ENCODE measurements at regions of chr4 and their contacts with region 1.

Region 1: DNA sequence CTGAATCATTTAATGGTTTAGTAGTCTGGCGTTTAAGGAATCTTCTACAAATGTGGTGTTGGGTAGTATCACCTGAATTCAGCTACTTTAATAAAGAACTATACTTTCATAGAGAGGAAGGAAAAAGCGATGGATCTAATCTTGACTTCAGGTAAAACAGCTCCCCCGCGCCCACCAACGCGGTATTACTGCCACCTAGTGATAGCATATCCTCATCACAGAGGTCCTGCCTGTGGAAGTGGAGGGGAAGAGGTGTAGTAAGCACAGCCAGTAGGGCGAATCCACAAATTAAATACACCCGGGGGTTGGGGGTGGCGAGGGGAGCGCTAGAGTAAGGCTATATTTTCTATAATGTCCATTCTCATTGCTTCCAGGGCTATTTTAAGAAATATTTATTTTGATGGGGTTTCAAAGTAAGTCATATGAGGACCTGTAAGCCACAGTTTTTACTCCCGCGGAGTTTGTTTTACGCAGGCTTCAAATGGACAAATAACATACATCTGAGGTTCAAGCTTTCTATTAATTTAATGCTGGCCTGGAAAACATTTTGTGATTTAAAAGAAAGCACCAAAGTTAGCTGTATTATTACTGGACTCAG is 8.3 kb upstream of the DAPP1 start:
- DNase-seq: peak; percentile 86
- ATAC-seq: peak; percentile 95
- H3K4me3 Mint-ChIP-seq: no peak overlapping the region
- H3K27ac Mint-ChIP-seq: no peak overlapping the region
- H3K4me1 Mint-ChIP-seq: peaks cover 17% of the 10 kb centered on the region
- H3K27me3 Mint-ChIP-seq: no peaks in the 10 kb centered on the region

Region 2: DNA sequence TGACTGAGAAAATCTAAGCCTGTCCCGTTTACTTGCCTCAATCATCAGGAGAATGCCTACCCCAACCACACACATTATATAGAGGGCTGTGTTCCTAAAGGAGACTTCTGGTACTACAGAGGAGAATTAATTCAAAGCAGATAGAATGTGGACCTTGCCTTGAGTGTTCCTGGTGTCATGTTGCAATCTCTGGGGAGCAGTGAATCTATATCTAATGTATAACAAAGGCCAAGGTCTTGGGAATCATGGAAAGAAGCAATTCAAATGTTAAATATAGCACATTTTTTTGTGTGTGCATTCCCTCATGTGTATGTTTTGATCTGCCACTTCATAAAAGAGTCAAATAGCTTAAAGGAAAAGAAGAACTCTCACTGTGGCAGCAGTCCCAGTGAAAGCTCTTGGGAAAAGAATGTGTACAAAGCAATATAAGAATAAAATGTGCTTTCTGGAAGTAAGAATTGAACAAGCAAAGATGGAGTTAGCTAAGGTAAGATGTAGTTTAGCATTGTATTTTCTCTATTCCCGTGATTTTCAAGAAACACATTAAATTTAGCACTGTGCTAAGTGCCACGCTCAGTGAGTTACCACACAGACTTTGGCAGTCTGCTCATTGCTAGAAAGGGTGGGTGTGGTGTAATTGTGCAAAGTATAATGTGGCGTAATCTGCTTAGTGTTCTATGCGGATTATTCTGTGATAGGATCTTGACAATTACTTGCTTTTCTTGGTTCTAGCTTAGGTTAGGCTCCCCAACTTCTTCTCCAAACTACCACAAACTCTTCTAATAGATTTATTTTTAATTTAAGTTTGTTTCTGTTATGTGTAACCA is 603.0 kb before region 1 on chr4:
- CTCF ChIA-PET with region 1: no interaction called
- POLR2A ChIA-PET with region 1: no interaction called
- intact Hi-C with region 1: no loop called
- DNase-seq: no peak
- ATAC-seq: no peak
- H3K4me3 Mint-ChIP-seq: no peak overlapping the region
- H3K27ac Mint-ChIP-seq: no peak overlapping the region
- H3K4me1 Mint-ChIP-seq: no peaks in the 10 kb centered on the region
- H3K27me3 Mint-ChIP-seq: no peaks in the 10 kb centered on the region

Region 3: DNA sequence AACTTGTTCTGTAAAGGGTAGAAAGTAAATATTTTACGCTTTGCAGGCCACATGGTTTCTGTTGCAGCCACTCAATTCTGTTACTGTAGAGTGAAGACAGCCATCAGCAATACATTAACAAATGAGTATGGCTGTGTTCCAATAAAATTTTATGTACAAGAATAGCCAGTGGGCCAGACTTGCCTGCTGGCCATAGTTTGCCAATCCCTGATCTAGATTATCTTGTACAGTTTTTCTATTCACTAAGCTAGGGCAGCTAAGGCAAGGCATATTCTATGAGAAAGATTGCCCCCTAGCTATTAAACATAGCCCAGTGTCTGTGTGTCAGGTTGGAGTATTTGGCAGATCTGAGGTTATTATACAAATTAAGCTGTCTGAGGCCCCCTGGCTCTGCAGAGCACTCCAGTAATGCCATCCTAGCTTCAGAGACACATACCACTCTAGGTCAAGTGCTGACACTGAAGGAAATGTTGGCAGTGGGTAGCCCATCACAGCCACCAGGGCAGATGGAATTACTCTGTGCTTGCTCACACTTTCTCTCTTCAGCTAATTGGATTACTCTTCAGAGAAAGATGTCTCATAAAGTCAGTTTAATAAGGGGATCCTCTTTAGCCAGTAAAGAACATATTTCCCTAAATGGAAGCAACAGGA is 193.1 kb before region 1 on chr4:
- CTCF ChIA-PET with region 1: interaction called, 11 read pairs
- POLR2A ChIA-PET with region 1: no interaction called
- intact Hi-C with region 1: no loop called
- DNase-seq: no peak
- ATAC-seq: no peak
- H3K4me3 Mint-ChIP-seq: no peak overlapping the region
- H3K27ac Mint-ChIP-seq: no peak overlapping the region
- H3K4me1 Mint-ChIP-seq: no peaks in the 10 kb centered on the region
- H3K27me3 Mint-ChIP-seq: peaks cover 7% of the 10 kb centered on the region

Region 4: DNA sequence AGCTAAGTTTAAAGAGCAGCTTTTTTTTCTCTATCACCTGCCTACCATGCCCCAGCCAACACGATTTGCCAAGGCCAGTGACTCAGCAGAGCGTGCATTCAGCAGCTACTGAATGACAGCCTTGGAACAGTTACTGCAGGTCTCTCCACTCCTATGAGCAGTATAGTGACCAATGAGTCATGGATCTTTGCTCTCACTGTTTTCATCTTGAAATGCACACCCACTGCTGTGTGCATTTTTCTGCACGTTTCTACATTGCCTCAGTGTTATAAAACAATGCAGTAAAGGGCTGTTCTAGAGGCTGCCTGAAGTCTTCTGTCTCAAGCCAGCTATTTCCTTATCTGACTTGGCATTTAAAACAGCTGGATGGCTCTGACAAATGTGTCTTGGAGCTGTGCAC is 84.7 kb before region 1 on chr4:
- CTCF ChIA-PET with region 1: interaction called, 12 read pairs
- POLR2A ChIA-PET with region 1: no interaction called
- intact Hi-C with region 1: loop called in 1 of 2 experiments (anchors 5 kb)
- DNase-seq: peak; percentile 55
- ATAC-seq: peak; percentile 97
- H3K4me3 Mint-ChIP-seq: no peak overlapping the region
- H3K27ac Mint-ChIP-seq: no peak overlapping the region
- H3K4me1 Mint-ChIP-seq: no peaks in the 10 kb centered on the region
- H3K27me3 Mint-ChIP-seq: peaks cover 4% of the 10 kb centered on the region

Region 5: DNA sequence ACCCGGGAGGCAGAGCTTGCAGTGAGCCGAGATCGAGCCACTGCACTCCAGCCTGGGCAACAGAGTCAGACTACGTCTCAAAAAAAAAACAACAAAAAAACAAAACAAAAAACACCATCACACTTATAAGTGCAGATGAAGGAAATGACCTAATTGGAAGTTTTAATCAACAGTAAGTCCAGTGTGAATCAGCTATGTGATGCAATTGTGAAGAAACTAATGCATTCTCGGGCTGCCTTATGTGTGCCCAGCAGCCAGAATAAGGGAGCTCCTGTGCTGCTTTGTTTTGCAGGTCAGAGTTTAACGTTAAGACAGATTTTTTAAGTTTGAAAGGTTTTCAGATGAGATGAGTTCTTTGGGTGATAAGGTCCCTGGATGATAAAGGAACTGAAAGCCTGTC is 19.1 kb after region 1 on chr4:
- CTCF ChIA-PET with region 1: interaction called, 25 read pairs
- POLR2A ChIA-PET with region 1: no interaction called
- intact Hi-C with region 1: no loop called
- DNase-seq: no peak
- ATAC-seq: peak; percentile 25
- H3K4me3 Mint-ChIP-seq: no peak overlapping the region
- H3K27ac Mint-ChIP-seq: peak overlapping the region; percentile 47
- H3K4me1 Mint-ChIP-seq: peaks cover 45% of the 10 kb centered on the region
- H3K27me3 Mint-ChIP-seq: no peaks in the 10 kb centered on the region

Region 6: GRCh38 chr4:99868126-99868596 is 59.8 kb after region 1 on chr4:
- CTCF ChIA-PET with region 1: interaction called, 11 read pairs
- POLR2A ChIA-PET with region 1: no interaction called
- intact Hi-C with region 1: no loop called
- DNase-seq: peak; percentile 49
- ATAC-seq: peak; percentile 95
- H3K4me3 Mint-ChIP-seq: no peak overlapping the region
- H3K27ac Mint-ChIP-seq: peak overlapping the region; percentile 72
- H3K4me1 Mint-ChIP-seq: peaks cover 12% of the 10 kb centered on the region
- H3K27me3 Mint-ChIP-seq: no peaks in the 10 kb centered on the region

Region 7: GRCh38 chr4:99949034-99949998 is 141.0 kb after region 1 on chr4:
- CTCF ChIA-PET with region 1: interaction called, 16 read pairs
- POLR2A ChIA-PET with region 1: interaction called, 3 read pairs
- intact Hi-C with region 1: loop called in 1 of 2 experiments (anchors 1 kb)
- DNase-seq: peak; percentile 96
- ATAC-seq: peak; percentile 52
- H3K4me3 Mint-ChIP-seq: no peak overlapping the region
- H3K27ac Mint-ChIP-seq: no peak overlapping the region
- H3K4me1 Mint-ChIP-seq: peaks cover 33% of the 10 kb centered on the region
- H3K27me3 Mint-ChIP-seq: no peaks in the 10 kb centered on the region

Region 8: DNA sequence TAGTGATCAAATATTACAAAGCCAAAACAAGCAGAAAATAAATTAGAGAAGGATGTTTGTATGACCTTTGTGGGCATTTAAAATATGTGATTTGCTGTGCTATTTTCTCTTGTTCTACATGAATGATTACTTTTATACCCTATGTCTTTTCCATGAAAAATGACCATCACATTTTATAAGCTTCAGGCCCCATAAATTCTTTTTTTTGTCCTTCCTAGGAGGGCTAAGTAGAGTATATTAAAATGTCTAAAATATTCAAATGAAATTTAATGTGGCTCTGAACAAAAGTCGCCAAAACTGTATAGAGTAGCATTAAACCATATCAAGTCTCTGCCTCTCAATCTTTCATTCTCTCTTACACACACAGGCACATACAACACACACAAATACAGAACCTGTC is 725.4 kb after region 1 on chr4:
- CTCF ChIA-PET with region 1: no interaction called
- POLR2A ChIA-PET with region 1: no interaction called
- intact Hi-C with region 1: no loop called
- DNase-seq: no peak
- ATAC-seq: no peak
- H3K4me3 Mint-ChIP-seq: no peak overlapping the region
- H3K27ac Mint-ChIP-seq: no peak overlapping the region
- H3K4me1 Mint-ChIP-seq: peaks cover 5% of the 10 kb centered on the region
- H3K27me3 Mint-ChIP-seq: peaks cover 5% of the 10 kb centered on the region

Measured in activated CD4-positive, alpha-beta T cell treated with anti-CD3 and anti-CD28 coated beads for 36 hours (primary cell).